ENCODE measurements at regions of chr18 and their contacts with region 1.

Region 1: DNA sequence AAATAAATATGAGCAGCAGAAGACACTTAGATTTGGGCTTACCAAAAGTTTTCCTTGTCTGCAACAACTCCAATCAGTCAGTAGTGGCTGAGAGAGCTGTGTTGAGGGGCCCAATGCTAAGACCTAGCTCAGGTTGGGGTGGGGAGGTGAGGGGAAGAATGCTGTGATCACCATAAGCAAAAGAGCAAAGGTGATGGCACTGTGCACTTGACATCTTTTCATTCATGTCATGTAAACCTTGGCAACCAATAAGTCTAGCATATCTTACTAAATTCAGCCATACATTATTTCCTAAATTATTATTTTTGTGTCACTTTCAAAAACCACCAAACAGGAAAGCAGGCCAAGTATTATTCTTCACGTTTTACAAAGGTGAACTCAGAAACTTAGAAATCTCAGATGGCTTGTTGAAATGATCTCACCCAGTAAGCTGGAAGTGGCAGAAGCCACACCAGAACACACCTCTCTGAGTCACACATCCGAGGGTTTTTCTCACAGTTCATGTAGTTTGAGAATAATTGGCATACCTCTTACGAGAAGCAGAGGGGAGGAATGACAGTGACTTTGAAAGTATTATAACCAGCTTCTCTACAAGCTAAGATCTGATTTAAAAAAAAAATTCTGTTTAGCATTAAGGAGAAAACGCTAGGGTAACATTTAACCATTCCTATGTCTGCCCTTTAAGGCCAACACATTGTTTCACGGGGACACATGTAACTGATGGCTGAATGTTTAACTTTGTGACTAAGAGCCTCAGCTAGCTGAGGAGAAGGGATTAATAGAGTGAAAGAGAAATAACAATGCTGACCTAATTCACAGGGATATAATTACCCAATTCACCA is 43.3 kb upstream of the SETBP1 start:
- DNase-seq: no peak
- ATAC-seq: peak; percentile 49
- H3K4me3 ChIP-seq: no peak overlapping the region
- H3K4me3 Mint-ChIP-seq: no peak overlapping the region
- H3K27ac ChIP-seq: no peak overlapping the region
- H3K27ac Mint-ChIP-seq: peak overlapping the region in 1 of 9 donors; percentile 33
- H3K4me1 ChIP-seq: no peaks in the 10 kb centered on the region
- H3K4me1 Mint-ChIP-seq: peaks cover 0 to 8% (median 0%) of the 10 kb centered on the region in 7 donors
- H3K27me3 ChIP-seq: no peaks in the 10 kb centered on the region
- H3K27me3 Mint-ChIP-seq: peaks cover 0 to 19% (median 0%) of the 10 kb centered on the region in 5 donors

Region 2: GRCh38 chr18:44280479-44280878 is 357.0 kb before region 1 on chr18:
- CTCF ChIA-PET with region 1: no interaction called
- POLR2A ChIA-PET with region 1: no interaction called
- intact Hi-C with region 1: no loop called
- DNase-seq: no peak
- ATAC-seq: no peak
- H3K4me3 ChIP-seq: no peak overlapping the region
- H3K4me3 Mint-ChIP-seq: no peak overlapping the region
- H3K27ac ChIP-seq: no peak overlapping the region
- H3K27ac Mint-ChIP-seq: no peak overlapping the region
- H3K4me1 ChIP-seq: no peaks in the 10 kb centered on the region
- H3K4me1 Mint-ChIP-seq: no peaks in the 10 kb centered on the region
- H3K27me3 ChIP-seq: no peaks in the 10 kb centered on the region
- H3K27me3 Mint-ChIP-seq: no peaks in the 10 kb centered on the region

Region 3: DNA sequence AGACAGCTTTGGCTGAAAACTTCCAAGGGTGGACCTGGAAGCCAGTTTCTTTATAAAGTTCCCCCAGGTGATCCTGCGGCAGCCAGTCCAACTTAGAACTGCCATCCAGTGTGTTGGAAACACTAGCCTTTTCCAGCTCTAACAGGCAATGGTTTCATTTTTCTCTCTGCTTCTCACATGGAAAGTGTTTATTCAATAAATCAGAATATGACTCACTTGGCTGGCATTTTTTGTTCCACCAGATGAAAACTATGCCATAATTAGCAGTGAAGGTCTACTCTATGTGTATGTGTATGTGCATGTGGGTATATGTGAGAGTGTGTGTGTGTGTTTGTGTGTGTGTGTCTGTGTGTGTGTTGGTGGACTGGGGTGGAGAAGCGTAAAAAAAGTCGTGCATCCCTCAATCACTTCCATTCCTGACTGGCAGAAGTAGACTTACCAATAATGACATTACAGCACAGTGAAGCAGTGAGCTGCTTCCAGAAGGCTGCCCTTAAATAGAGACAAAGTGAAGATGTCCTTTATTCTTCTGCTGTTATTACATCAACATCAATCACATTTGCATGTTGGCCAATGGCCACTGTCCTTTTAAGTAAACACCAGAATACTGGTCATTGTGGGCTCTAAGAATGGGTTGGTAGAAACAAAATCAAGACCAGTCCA is 47.6 kb before region 1 on chr18:
- CTCF ChIA-PET with region 1: no interaction called
- POLR2A ChIA-PET with region 1: no interaction called
- intact Hi-C with region 1: loop called in 1 of 2 experiments (anchors 5 kb)
- DNase-seq: no peak
- ATAC-seq: no peak
- H3K4me3 ChIP-seq: no peak overlapping the region
- H3K4me3 Mint-ChIP-seq: no peak overlapping the region
- H3K27ac ChIP-seq: no peak overlapping the region
- H3K27ac Mint-ChIP-seq: no peak overlapping the region
- H3K4me1 ChIP-seq: no peaks in the 10 kb centered on the region
- H3K4me1 Mint-ChIP-seq: no peaks in the 10 kb centered on the region
- H3K27me3 ChIP-seq: no peaks in the 10 kb centered on the region
- H3K27me3 Mint-ChIP-seq: peaks cover 4 to 10% (median 6%) of the 10 kb centered on the region in 5 donors

Region 4: GRCh38 chr18:44700652-44701051 is 63.2 kb after region 1 on chr18:
- CTCF ChIA-PET with region 1: no interaction called
- POLR2A ChIA-PET with region 1: no interaction called
- intact Hi-C with region 1: no loop called
- DNase-seq: no peak
- ATAC-seq: peak; percentile 91
- H3K4me3 ChIP-seq: no peak overlapping the region
- H3K4me3 Mint-ChIP-seq: no peak overlapping the region
- H3K27ac ChIP-seq: no peak overlapping the region
- H3K27ac Mint-ChIP-seq: no peak overlapping the region
- H3K4me1 ChIP-seq: no peaks in the 10 kb centered on the region
- H3K4me1 Mint-ChIP-seq: peaks cover 0 to 13% (median 4%) of the 10 kb centered on the region in 7 donors
- H3K27me3 ChIP-seq: no peaks in the 10 kb centered on the region
- H3K27me3 Mint-ChIP-seq: peaks cover 0 to 38% (median 0%) of the 10 kb centered on the region in 5 donors